MCF 10A (cell line): ENCODE measurements at regions of chr1 and their contacts with region 1.

Region 1: GRCh38 chr1:166527752-166528151 is 311.5 kb upstream of the POGK start:
- DNase-seq: no peak
- H3K4me3 Mint-ChIP-seq: no peak overlapping the region
- H3K27ac Mint-ChIP-seq: no peak overlapping the region
- H3K4me1 Mint-ChIP-seq: no peaks in the 10 kb centered on the region
- H3K27me3 Mint-ChIP-seq: no peaks in the 10 kb centered on the region
- CTCF ChIP-seq: no peak

Region 2: DNA sequence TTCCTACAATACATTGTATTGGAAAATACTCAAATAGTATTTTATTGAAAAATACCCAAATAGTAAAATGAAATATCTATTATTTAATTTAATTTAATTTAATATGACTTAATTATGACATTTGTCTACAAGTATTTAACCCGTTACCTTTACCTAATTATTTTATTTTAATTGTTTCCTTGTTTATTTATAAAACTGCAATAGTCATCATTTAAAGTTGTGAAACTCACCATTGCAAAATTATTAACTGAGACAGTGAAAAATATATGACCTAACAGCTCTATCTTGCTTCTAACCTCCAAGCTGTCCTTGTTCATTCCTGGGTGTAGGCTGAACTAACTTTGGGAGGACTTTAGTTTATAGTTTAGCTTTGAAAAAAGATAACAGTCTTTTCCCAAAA is 10.9 kb after region 1 on chr1:
- CTCF ChIA-PET with region 1: interaction called, 10 read pairs
- POLR2A ChIA-PET with region 1: no interaction called
- intact Hi-C with region 1: no loop called
- DNase-seq: no peak
- H3K4me3 Mint-ChIP-seq: no peak overlapping the region
- H3K27ac Mint-ChIP-seq: no peak overlapping the region
- H3K4me1 Mint-ChIP-seq: no peaks in the 10 kb centered on the region
- H3K27me3 Mint-ChIP-seq: no peaks in the 10 kb centered on the region
- CTCF ChIP-seq: no peak

Region 3: DNA sequence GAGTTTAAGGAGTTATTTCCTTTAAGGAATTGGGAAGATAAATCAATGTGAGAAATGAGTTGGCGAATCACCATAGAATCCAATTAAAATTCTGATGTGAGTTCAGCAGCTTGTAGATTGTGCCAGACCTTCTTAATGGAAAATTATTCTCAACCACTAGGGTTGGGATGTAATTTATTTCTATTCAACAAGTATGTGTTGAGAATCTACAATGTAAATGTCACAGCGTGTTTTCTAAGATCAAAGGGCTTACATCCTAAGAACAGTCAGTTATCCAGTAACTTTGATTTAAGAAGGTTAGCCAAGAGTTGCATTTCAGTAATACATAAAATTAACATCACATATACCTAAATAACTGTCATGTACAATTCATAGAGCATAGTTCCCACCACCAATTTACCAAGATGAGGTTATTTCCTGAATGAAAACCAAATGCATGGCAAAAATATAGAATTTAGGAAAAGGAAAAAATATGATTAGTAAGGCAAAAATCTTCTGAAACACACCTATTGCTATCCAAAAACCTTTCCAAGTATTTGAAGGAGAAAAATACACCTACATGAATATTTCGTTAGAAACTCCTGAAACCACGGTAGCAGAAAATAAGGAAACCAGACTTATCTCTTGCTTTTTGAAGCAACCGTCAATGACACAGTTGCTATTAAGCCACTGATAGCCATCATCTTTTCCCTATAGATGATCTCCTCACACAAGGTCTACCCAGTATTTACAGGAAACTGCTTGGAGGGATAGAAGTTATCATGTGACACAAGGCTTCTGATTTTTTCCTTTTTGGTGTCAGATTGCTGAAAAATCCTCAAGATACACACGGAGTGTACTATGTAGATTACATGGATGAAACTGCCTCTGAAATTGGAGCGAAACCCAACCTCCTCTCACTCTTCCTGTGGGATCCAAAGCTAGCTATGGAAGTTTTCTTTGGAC is 52.1 kb after region 1 on chr1:
- CTCF ChIA-PET with region 1: no interaction called
- POLR2A ChIA-PET with region 1: no interaction called
- intact Hi-C with region 1: no loop called
- DNase-seq: no peak
- H3K4me3 Mint-ChIP-seq: no peak overlapping the region
- H3K27ac Mint-ChIP-seq: no peak overlapping the region
- H3K4me1 Mint-ChIP-seq: no peaks in the 10 kb centered on the region
- H3K27me3 Mint-ChIP-seq: peaks cover 62% of the 10 kb centered on the region
- CTCF ChIP-seq: no peak

Region 4: GRCh38 chr1:166721145-166721544 is 193.4 kb after region 1 on chr1:
- CTCF ChIA-PET with region 1: no interaction called
- POLR2A ChIA-PET with region 1: no interaction called
- intact Hi-C with region 1: no loop called
- DNase-seq: peak; percentile 25
- H3K4me3 Mint-ChIP-seq: no peak overlapping the region
- H3K27ac Mint-ChIP-seq: no peak overlapping the region
- H3K4me1 Mint-ChIP-seq: no peaks in the 10 kb centered on the region
- H3K27me3 Mint-ChIP-seq: no peaks in the 10 kb centered on the region
- CTCF ChIP-seq: no peak

Region 5: GRCh38 chr1:166814611-166815010 is 286.9 kb after region 1 on chr1:
- CTCF ChIA-PET with region 1: interaction called, 11 read pairs
- POLR2A ChIA-PET with region 1: no interaction called
- intact Hi-C with region 1: no loop called
- DNase-seq: no peak
- H3K4me3 Mint-ChIP-seq: no peak overlapping the region
- H3K27ac Mint-ChIP-seq: no peak overlapping the region
- H3K4me1 Mint-ChIP-seq: no peaks in the 10 kb centered on the region
- H3K27me3 Mint-ChIP-seq: no peaks in the 10 kb centered on the region
- CTCF ChIP-seq: no peak

Region 6: DNA sequence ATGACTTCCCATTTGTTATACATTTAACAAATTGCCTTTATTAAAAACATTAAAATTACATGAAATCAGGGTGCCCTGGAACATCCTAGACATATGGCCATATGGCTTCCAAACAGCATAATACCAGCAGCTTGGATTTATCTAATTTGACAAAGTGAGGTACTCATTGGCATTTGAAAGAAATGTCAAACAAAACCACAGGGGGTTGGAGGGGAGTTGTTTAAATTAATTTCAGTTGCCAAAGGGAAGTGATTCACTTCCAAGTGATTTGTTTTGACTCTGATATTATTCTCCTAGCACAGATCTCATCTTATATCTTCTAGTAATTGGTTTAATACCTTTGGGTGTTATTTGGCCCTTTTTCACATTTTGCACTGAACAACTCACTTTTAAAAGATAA is 668.4 kb after region 1 on chr1:
- CTCF ChIA-PET with region 1: no interaction called
- POLR2A ChIA-PET with region 1: no interaction called
- intact Hi-C with region 1: no loop called
- DNase-seq: peak; percentile 36
- H3K4me3 Mint-ChIP-seq: no peak overlapping the region
- H3K27ac Mint-ChIP-seq: no peak overlapping the region
- H3K4me1 Mint-ChIP-seq: peaks cover 15% of the 10 kb centered on the region
- H3K27me3 Mint-ChIP-seq: no peaks in the 10 kb centered on the region
- CTCF ChIP-seq: no peak